ENCODE measurements at regions of chr4 and their contacts with region 1.

Region 1: DNA sequence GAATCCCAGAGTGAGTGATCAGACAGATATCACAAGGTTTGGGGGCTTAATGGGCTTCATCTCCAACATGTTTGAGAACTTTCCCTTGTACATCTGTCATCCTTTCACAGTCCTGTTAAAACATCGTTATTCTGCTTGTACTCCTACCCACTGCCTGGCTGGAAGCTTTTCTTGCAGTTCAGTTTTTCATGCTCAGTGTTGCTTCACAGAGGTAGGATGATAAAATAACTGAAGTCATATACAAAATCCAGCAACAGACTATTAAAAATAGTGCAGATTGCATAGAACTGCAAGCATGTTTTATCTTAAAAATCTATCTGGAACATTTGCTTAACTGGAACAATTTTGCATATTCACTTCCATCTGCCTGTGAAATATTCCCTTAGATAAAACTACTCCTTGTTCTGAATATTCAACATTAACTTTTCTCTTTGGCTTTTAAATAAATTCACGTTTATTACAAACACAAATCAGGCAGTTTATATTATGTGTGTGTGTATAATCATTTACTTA is 579.6 kb upstream of the IGFBP7 start:
- DNase-seq: no peak
- ATAC-seq: no peak
- H3K4me3 Mint-ChIP-seq: no peak overlapping the region
- H3K27ac Mint-ChIP-seq: no peak overlapping the region
- H3K4me1 Mint-ChIP-seq: no peaks in the 10 kb centered on the region
- H3K27me3 Mint-ChIP-seq: no peaks in the 10 kb centered on the region

Region 2: GRCh38 chr4:57736781-57737180 is 47.0 kb after region 1 on chr4:
- CTCF ChIA-PET with region 1: no interaction called
- POLR2A ChIA-PET with region 1: no interaction called
- intact Hi-C with region 1: loop called in 1 of 2 experiments (anchors 5 kb)
- DNase-seq: no peak
- ATAC-seq: no peak
- H3K4me3 Mint-ChIP-seq: no peak overlapping the region
- H3K27ac Mint-ChIP-seq: no peak overlapping the region
- H3K4me1 Mint-ChIP-seq: no peaks in the 10 kb centered on the region
- H3K27me3 Mint-ChIP-seq: no peaks in the 10 kb centered on the region